ENCODE measurements at regions of chrX and their contacts with region 1.

Region 1: DNA sequence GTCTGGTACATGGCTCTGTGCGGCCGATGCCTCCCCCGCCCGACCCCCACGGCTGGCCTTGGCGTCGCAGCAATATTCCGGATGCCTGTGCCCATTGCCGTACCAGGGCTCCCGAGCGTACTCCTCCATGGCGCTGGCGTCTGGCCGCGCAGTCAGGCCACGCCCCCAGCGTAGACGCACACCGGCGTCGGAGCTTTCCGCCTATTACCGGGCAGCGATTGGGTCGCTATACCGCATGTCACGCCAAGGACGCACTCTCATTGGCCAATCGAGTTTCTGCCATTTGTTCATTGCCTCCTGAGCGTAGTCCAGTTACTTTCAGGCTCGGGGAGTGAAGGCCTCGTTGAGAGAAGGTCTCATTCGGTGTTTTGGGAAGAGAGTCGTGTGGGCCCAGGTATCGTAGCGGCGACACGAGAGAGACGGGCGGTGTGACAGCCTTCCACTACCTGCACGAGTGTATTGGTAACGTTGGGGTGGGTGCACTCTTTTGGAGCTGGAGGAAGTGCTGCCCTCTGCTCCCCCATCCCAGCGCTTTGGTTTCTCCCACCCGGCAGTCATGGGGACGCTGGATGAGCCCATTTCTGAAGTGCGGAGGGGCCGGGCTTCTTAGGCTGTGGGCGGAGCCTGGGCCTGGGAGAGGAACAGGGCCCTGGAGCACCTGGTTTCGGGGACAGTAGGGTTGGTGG is at the starts of genes PQBP1 and TIMM17B:
- DNase-seq: peak; percentile 72 to 96 (median 84)
- ATAC-seq: peak; percentile 86
- H3K4me3 ChIP-seq: peak within 1 kb of the TSS; percentile 87 to 98
- H3K4me3 Mint-ChIP-seq: peak within 1 kb of the TSS; percentile 88
- H3K27ac ChIP-seq: peak within 1 kb of the TSS; percentile 98
- H3K27ac Mint-ChIP-seq: peak within 1 kb of the TSS; percentile 95
- H3K4me1 ChIP-seq: peaks cover 21% of the 10 kb centered on the region
- H3K4me1 Mint-ChIP-seq: peaks cover 29% of the 10 kb centered on the region
- H3K27me3 ChIP-seq: no peaks in the 10 kb centered on the region
- H3K27me3 Mint-ChIP-seq: no peaks in the 10 kb centered on the region
- CTCF ChIP-seq: no peak
- total RNA-seq, gene PQBP1: 79.9 to 82.1 TPM
- total RNA-seq, gene TIMM17B: 35.0 to 37.6 TPM

Region 2: DNA sequence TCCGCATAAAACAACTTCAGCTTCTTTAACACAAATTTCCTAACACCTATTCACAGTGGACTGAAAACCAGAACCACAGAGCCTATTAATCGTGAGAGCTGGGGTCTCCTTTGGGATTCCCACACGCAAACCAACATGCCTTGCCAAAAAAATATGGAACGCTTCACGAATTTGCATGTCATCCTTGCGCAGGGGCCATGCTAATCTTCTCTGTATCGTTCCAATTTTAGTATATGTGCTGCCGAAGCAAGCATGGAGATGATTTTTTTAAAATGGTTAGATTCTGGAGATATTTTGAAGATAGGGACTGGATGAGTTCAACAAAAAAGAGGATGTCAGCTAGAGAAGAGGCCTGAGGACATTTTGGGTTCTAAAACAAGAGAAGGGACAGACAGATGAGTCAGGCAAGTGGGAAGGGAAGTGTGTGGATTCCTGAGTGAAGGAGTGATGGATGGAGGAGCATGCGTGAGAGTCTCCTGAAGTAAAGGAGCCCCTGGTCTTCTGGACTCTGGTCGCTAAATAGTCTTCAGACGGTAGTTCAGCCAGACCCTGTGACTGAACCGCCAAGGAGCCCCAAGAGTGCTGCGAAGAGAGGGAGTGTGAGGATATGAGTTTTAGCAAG is 120.8 kb before region 1 on chrX:
- CTCF ChIA-PET with region 1: no interaction called
- POLR2A ChIA-PET with region 1: no interaction called
- intact Hi-C with region 1: no loop called
- DNase-seq: no peak
- ATAC-seq: no peak
- H3K4me3 ChIP-seq: no peak overlapping the region
- H3K4me3 Mint-ChIP-seq: no peak overlapping the region
- H3K27ac ChIP-seq: no peak overlapping the region
- H3K27ac Mint-ChIP-seq: no peak overlapping the region
- H3K4me1 ChIP-seq: no peaks in the 10 kb centered on the region
- H3K4me1 Mint-ChIP-seq: no peaks in the 10 kb centered on the region
- H3K27me3 ChIP-seq: no peaks in the 10 kb centered on the region
- H3K27me3 Mint-ChIP-seq: no peaks in the 10 kb centered on the region
- CTCF ChIP-seq: no peak

Region 3: DNA sequence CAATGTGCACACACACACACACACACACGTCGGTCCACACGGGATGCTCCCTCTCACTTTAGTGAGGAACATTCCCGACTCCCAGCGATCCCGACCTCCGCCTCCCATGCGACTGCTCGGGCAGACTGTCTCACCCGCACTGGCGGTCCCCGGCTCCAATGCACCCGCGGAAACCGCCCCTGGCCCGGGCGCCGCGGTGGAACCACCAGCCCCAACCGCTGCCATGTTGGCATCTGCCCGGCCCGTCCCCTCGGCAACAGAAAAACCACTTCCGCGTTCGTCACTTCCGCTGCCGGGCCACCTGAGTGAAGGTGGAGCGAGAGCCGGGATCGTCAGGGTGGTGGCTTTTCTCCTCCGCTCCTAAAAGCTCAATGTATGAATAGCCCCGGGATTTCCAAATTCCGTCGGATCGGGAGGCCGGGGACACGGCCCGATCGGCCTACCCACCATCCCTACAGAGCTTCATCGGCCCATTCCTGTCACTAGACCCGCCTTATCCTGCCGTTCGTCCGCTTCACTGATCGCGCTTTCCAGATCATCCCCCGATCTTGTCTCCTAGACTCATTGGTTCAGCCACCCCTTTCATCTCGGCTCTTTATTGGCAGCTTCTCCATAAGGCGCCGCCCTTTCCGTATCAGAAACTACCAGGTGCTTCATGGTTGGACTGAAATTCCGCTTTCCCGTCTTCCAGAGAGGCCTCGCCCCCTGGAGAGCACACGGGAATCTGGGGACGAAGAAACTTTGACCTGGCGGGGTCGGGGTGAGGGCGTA is 13.8 kb after region 1 on chrX and contains the start of gene SLC35A2:
- CTCF ChIA-PET with region 1: interaction called, 4 read pairs
- POLR2A ChIA-PET with region 1: interaction called, 16 read pairs
- intact Hi-C with region 1: loop called (anchors 1 kb)
- DNase-seq: peak; percentile 75 to 92 (median 89)
- ATAC-seq: peak; percentile 77
- H3K4me3 ChIP-seq: peak within 1 kb of the TSS; percentile 66 to 74
- H3K4me3 Mint-ChIP-seq: peak within 1 kb of the TSS; percentile 95
- H3K27ac ChIP-seq: peak within 1 kb of the TSS; percentile 89 to 92
- H3K27ac Mint-ChIP-seq: peak within 1 kb of the TSS; percentile 97
- H3K4me1 ChIP-seq: peaks cover 48% of the 10 kb centered on the region
- H3K4me1 Mint-ChIP-seq: peaks cover 51% of the 10 kb centered on the region
- H3K27me3 ChIP-seq: no peaks in the 10 kb centered on the region
- H3K27me3 Mint-ChIP-seq: no peaks in the 10 kb centered on the region
- CTCF ChIP-seq: no peak
- total RNA-seq, gene SLC35A2: 14.6 to 16.6 TPM

Region 4: GRCh38 chrX:49002091-49002935 is 104.5 kb after region 1 on chrX and contains the start of gene GRIPAP1:
- CTCF ChIA-PET with region 1: no interaction called
- POLR2A ChIA-PET with region 1: no interaction called
- intact Hi-C with region 1: loop called in 1 of 2 experiments (anchors 2 kb)
- DNase-seq: peak; percentile 63 to 95 (median 74)
- ATAC-seq: peak; percentile 79
- H3K4me3 ChIP-seq: peak within 1 kb of the TSS; percentile 82 to 87
- H3K4me3 Mint-ChIP-seq: peak within 1 kb of the TSS; percentile 98
- H3K27ac ChIP-seq: peak within 1 kb of the TSS; percentile 96 to 99
- H3K27ac Mint-ChIP-seq: peak within 1 kb of the TSS; percentile 99
- H3K4me1 ChIP-seq: peaks cover 16% of the 10 kb centered on the region
- H3K4me1 Mint-ChIP-seq: peaks cover 31% of the 10 kb centered on the region
- H3K27me3 ChIP-seq: no peaks in the 10 kb centered on the region
- H3K27me3 Mint-ChIP-seq: no peaks in the 10 kb centered on the region
- CTCF ChIP-seq: no peak
- total RNA-seq, gene GRIPAP1: 102 to 114 TPM

Region 5: DNA sequence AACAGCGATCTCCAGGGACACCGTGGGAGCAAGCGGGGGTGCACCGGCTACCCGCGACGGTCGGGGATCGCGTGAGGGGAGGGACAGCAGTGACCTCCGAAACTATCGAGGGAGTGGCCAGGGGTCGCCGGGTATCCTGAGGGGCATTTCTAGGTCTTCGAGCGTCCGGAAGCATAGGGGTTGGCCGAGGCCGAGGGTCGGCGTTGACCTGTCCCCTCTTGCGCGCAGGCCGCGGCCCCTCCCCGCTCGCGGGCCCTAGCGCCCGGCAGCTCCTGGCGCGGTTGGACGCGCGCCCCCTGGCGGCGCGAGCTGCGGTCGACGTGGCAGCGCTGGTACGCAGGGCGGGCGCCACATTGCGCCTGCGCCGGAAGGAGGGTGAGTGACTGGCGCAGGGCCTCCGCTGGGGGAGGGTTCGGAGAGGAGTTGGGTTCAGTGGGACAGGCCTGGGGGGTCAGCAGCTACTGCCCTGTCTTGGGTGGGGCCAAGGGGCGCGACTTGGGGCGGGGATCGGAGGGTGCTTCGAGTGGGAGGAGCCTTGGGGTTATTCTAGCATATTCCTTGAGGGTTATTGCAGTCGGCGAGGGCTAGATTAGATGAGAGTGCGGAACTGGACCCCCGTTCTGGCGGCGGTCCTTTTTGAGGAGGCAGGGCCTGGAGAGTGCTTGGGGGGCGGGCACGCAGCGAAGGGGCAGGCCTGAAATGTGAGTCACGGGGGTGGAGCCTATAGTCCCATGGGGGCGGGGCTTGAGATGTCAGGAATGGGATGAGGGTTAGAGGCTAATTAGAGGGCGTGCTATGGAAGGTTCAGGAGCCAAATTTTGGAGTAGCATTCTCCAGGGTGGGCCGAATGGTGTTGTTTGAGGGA is 266.0 kb after region 1 on chrX:
- CTCF ChIA-PET with region 1: no interaction called
- POLR2A ChIA-PET with region 1: no interaction called
- intact Hi-C with region 1: loop called in 1 of 2 experiments (anchors 10 kb)
- DNase-seq: peak in 8 of 9 experiments; percentile 67 to 91 (median 82)
- ATAC-seq: peak; percentile 54
- H3K4me3 ChIP-seq: peak overlapping the region; percentile 49
- H3K4me3 Mint-ChIP-seq: peak overlapping the region; percentile 81
- H3K27ac ChIP-seq: peak overlapping the region; percentile 56 to 84
- H3K27ac Mint-ChIP-seq: peak overlapping the region; percentile 92
- H3K4me1 ChIP-seq: peaks cover 21% of the 10 kb centered on the region
- H3K4me1 Mint-ChIP-seq: peaks cover 27% of the 10 kb centered on the region
- H3K27me3 ChIP-seq: no peaks in the 10 kb centered on the region
- H3K27me3 Mint-ChIP-seq: no peaks in the 10 kb centered on the region
- CTCF ChIP-seq: peak; percentile 57

Measured in CD8-positive, alpha-beta T cell (primary cell).